ENCODE measurements at regions of chr10 and their contacts with region 1.

Region 1: GRCh38 chr10:6202684-6203330 is at the start of gene PFKFB3:
- DNase-seq: peak; percentile 96
- H3K4me3 Mint-ChIP-seq: peak within 1 kb of the TSS; percentile 90
- H3K27ac Mint-ChIP-seq: peak within 1 kb of the TSS; percentile 91
- H3K4me1 Mint-ChIP-seq: peaks cover 32% of the 10 kb centered on the region
- H3K27me3 Mint-ChIP-seq: no peaks in the 10 kb centered on the region
- total RNA-seq, gene PFKFB3: 70.6 to 76.4 TPM

Region 2: DNA sequence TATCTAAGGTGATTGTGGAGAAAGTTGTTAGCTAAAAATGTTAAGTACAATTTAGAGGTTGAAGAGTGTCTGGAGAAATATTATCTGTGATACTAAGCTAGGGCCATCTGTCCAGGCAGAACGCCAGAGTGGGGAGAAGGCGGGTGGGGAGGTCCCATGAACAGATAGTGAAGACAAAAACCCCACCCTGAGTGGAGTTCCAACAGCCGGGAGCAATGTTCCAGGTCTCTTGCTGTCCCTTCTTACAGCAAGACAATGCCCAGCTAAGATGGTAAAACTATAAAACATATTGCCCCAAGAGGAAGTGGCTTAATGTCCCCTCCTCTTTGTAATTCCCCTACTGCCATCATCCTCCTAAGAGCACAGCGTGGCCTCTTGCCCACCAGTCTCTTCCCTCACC is 215.1 kb before region 1 on chr10:
- CTCF ChIA-PET with region 1: no interaction called
- POLR2A ChIA-PET with region 1: no interaction called
- intact Hi-C with region 1: no loop called
- DNase-seq: no peak
- H3K4me3 Mint-ChIP-seq: no peak overlapping the region
- H3K27ac Mint-ChIP-seq: peak overlapping the region; percentile 8
- H3K4me1 Mint-ChIP-seq: peaks cover 10% of the 10 kb centered on the region
- H3K27me3 Mint-ChIP-seq: peaks cover 9% of the 10 kb centered on the region

Region 3: GRCh38 chr10:6088721-6089390 is 114.0 kb before region 1 on chr10 and contains the start of gene RBM17:
- CTCF ChIA-PET with region 1: interaction called, 15 read pairs
- POLR2A ChIA-PET with region 1: interaction called, 6 read pairs
- intact Hi-C with region 1: loop called (anchors 2 kb)
- DNase-seq: peak; percentile 98
- H3K4me3 Mint-ChIP-seq: peak within 1 kb of the TSS; percentile 90
- H3K27ac Mint-ChIP-seq: peak within 1 kb of the TSS; percentile 83
- H3K4me1 Mint-ChIP-seq: peaks cover 71% of the 10 kb centered on the region
- H3K27me3 Mint-ChIP-seq: no peaks in the 10 kb centered on the region
- total RNA-seq, gene RBM17: 151 to 155 TPM

Region 4: GRCh38 chr10:6163364-6164270 is 39.2 kb before region 1 on chr10:
- CTCF ChIA-PET with region 1: interaction called, 5 read pairs
- POLR2A ChIA-PET with region 1: interaction called, 13 read pairs
- intact Hi-C with region 1: loop called (anchors 2 kb)
- DNase-seq: peak; percentile 94
- H3K4me3 Mint-ChIP-seq: peak overlapping the region; percentile 80
- H3K27ac Mint-ChIP-seq: peak overlapping the region; percentile 94
- H3K4me1 Mint-ChIP-seq: peaks cover 59% of the 10 kb centered on the region
- H3K27me3 Mint-ChIP-seq: no peaks in the 10 kb centered on the region

Region 5: GRCh38 chr10:6239213-6239991 is 36.6 kb after region 1 on chr10:
- CTCF ChIA-PET with region 1: interaction called, 6 read pairs
- POLR2A ChIA-PET with region 1: no interaction called
- intact Hi-C with region 1: loop called (anchors 1 kb)
- DNase-seq: peak; percentile 86
- H3K4me3 Mint-ChIP-seq: no peak overlapping the region
- H3K27ac Mint-ChIP-seq: peak overlapping the region; percentile 76
- H3K4me1 Mint-ChIP-seq: peaks cover 25% of the 10 kb centered on the region
- H3K27me3 Mint-ChIP-seq: no peaks in the 10 kb centered on the region

Region 6: GRCh38 chr10:6300106-6300783 is 97.4 kb after region 1 on chr10:
- CTCF ChIA-PET with region 1: interaction called, 5 read pairs
- POLR2A ChIA-PET with region 1: interaction called, 3 read pairs
- intact Hi-C with region 1: loop called (anchors 2 kb)
- DNase-seq: peak; percentile 68
- H3K4me3 Mint-ChIP-seq: peak overlapping the region; percentile 64
- H3K27ac Mint-ChIP-seq: peak overlapping the region; percentile 93
- H3K4me1 Mint-ChIP-seq: peaks cover 61% of the 10 kb centered on the region
- H3K27me3 Mint-ChIP-seq: no peaks in the 10 kb centered on the region

Region 7: DNA sequence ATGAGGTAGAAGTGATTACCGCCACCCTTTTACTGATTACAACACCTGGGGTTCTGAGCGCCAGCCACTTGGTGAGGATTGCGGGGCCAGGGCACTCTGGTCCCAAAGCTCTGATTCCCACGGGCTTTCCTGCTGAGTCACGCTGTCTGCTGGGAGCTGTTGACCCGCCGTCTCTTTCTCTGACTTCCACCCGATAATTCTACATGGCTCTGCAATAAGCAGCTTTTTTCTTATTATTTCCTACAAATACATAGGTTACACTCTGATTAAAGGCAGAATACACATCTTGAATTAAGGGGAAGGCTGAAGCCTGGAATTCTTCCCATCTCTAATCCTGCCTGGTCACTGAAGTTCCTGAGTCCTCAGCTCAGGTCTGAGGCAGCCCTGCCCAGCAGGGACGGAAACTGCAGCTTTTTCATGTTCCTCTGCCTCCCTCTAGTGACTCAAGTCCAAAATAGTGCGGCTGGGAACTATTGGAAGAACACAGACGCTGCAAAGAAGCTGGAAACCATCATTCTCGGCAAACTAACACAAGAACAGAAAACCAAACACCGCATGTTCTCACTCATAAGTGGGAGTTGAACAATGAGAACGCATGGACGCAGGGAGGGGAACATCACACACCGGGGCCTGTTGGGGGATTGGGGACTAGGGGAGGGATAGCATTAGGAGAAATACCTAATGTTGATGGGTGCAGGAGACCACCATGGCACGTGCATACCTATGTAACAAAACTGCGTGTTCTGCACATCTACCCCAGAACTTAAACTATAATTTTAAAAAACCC is 198.9 kb after region 1 on chr10:
- CTCF ChIA-PET with region 1: interaction called, 160 read pairs
- POLR2A ChIA-PET with region 1: interaction called, 23 read pairs
- intact Hi-C with region 1: loop called (anchors 1 kb)
- DNase-seq: peak; percentile 71
- H3K4me3 Mint-ChIP-seq: peak overlapping the region; percentile 9
- H3K27ac Mint-ChIP-seq: peak overlapping the region; percentile 35
- H3K4me1 Mint-ChIP-seq: peaks cover 42% of the 10 kb centered on the region
- H3K27me3 Mint-ChIP-seq: peaks cover 3% of the 10 kb centered on the region